PC-3 (cell line): ENCODE measurements at regions of chr6 and their contacts with region 1.

Region 1: DNA sequence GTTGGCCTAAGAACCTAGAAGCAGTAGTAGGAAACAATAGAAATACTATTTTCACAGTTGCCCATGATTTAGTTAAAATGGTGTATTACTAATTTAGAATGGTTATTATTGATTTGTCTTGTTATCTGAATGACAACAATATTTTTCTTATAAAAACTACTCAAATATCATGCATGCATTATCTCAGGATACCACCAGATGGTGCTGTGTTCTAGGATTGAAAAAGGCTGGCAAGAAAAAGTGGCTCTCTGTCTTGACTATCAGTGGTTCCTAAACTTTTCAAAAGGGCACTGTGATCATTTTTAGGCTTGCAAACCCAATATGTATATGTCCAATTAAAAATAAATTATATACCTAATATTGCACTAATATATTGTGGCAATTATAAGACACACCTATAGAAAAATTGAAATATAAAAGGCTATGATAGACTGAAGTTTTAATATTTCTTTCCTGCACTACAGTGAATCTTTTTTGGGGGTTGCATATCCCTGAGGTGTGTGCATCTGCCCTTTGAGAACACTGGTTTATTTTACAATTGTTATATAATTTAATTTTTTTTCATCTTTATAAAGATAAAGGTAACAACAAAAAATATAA is 131.7 kb upstream of the MLIP start:
- DNase-seq: peak; percentile 76
- ATAC-seq: no peak
- H3K4me3 ChIP-seq: no peak overlapping the region
- H3K27ac ChIP-seq: no peak overlapping the region
- H3K4me1 ChIP-seq: peaks cover 24% of the 10 kb centered on the region
- H3K27me3 ChIP-seq: no peaks in the 10 kb centered on the region
- CTCF ChIP-seq: peak; percentile 89

Region 2: GRCh38 chr6:54191461-54191860 is 211.9 kb after region 1 on chr6:
- CTCF ChIA-PET with region 1: no interaction called
- POLR2A ChIA-PET with region 1: no interaction called
- intact Hi-C with region 1: no loop called
- DNase-seq: peak; percentile 7
- ATAC-seq: no peak
- H3K4me3 ChIP-seq: no peak overlapping the region
- H3K27ac ChIP-seq: no peak overlapping the region
- H3K4me1 ChIP-seq: no peaks in the 10 kb centered on the region; the same call in 1 of the 2 replicates
- H3K27me3 ChIP-seq: no peaks in the 10 kb centered on the region
- CTCF ChIP-seq: no peak

Region 3: DNA sequence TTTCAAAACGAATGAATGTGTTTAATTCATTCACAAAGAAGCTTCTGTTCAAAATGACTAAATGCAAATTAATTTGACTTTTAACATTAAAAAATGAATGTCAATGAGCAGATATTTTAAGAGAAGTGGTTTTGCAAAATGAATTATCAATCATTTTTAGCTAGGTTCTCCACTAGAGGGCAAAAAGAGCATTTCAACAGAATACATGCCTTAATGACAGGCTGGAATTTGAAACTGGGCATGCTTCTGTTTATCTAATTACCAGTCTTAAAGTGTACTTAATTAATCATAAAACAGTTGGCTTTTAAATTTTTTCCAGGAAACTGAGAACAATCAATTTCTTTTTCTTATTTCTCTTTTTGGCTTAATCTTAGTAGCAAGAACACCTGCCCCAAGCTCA is 264.9 kb after region 1 on chr6:
- CTCF ChIA-PET with region 1: no interaction called
- POLR2A ChIA-PET with region 1: no interaction called
- intact Hi-C with region 1: loop called (anchors 2 kb)
- DNase-seq: peak; percentile 71
- ATAC-seq: peak; percentile 48; the same call in 1 of the 2 replicates
- H3K4me3 ChIP-seq: no peak overlapping the region
- H3K27ac ChIP-seq: no peak overlapping the region
- H3K4me1 ChIP-seq: 0 out of 2 replicates have a peak, but pooled peaks cover 4% of the 10 kb centered on the region
- H3K27me3 ChIP-seq: no peaks in the 10 kb centered on the region
- CTCF ChIP-seq: peak; percentile 81